ENCODE measurements at regions of chr16 and their contacts with region 1.

Region 1: GRCh38 chr16:87062569-87063442 is 254.4 kb downstream of the C16orf95 start:
- DNase-seq: no peak
- H3K4me3 ChIP-seq: peak overlapping the region; percentile 34
- CTCF ChIP-seq: peak; percentile 81

Region 2: GRCh38 chr16:86558355-86559193 is 504.2 kb before region 1 on chr16:
- CTCF ChIA-PET with region 1: interaction called, 309 read pairs
- POLR2A ChIA-PET with region 1: no interaction called
- DNase-seq: no peak
- H3K4me3 ChIP-seq: no peak overlapping the region
- CTCF ChIP-seq: no peak

Region 3: DNA sequence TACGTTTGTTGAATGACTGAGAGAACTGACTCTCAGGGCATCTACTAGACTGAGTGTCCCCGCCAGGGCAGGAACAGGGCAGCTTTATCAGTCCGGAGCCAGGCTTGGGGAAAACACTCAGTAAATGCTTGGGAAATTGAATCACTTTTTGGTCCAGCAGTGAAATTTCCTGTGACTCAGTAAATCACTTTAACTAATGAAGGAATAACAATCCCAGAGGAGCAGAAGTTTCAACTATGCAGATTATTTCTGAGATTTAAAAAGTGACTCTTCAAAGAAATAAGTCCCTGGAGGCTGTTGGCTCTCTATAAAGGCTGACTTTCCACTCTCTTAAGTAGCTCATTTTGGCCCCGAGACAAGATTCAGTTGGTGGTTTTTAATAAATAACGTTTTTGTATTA is 382.6 kb before region 1 on chr16:
- CTCF ChIA-PET with region 1: interaction called, 14 read pairs
- POLR2A ChIA-PET with region 1: no interaction called
- DNase-seq: peak; percentile 86
- H3K4me3 ChIP-seq: no peak overlapping the region
- CTCF ChIP-seq: no peak

Region 4: GRCh38 chr16:86854058-86854621 is 208.7 kb before region 1 on chr16:
- CTCF ChIA-PET with region 1: interaction called, 11 read pairs
- POLR2A ChIA-PET with region 1: no interaction called
- DNase-seq: peak; percentile 82
- H3K4me3 ChIP-seq: no peak overlapping the region
- CTCF ChIP-seq: no peak

Region 5: DNA sequence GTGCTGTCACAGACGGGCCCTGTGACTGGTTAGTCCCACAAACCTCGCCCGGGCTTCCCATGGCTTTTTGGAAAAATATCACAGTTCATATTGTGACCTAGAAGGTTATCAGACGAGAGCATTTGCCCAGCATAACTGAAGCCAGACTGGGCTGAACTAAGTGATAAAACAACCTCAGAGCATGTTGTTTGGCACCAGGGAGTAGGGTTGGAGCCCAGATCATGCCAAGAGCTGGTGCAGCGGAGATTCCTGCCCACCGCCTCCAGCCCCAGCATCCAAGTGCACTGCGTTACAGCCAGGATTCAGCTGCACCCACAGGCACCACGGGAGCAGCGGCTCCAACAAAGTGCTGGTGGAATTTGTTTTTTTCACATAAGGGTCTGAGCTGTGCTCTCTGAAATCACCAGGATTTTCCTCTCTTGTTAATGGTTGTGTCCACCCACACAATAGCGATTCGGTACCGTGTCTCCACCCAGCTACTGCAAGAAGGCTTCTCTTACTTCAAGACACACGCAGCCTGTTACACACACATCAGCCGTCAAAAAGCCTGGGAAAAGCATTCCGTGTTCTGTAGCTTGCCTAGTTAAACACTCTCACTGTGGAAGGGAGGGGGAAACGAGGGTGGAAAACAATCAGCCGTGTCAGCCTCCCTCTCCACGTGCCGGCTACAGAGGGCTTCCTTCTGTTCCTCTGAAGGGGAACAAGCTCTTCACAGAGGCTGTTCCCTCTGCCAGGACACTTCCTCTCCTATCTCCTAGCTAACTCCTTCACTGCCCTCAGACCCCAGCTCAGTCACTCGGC is 19.4 kb before region 1 on chr16:
- CTCF ChIA-PET with region 1: interaction called, 105 read pairs
- POLR2A ChIA-PET with region 1: no interaction called
- DNase-seq: no peak
- H3K4me3 ChIP-seq: no peak overlapping the region
- CTCF ChIP-seq: no peak

Region 6: DNA sequence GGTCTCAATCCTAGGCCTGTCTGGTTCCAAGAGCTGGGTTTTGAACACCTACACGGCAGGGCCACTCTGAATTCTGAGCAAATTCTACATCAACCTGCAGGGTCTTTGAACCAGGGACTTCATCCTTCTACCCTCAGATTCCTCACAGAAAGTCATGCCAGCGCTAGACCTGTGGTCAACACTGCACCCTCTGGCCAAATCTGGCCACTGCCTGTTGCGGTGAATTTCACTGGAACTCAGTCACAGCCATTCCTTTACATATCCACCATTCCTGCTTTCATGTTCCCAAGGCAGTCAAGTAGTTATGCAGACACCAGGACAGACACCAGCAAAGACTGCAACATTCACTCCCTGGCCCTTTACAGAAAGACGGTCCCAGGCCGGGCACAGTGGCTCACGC is 109.8 kb after region 1 on chr16:
- CTCF ChIA-PET with region 1: no interaction called
- POLR2A ChIA-PET with region 1: no interaction called
- DNase-seq: no peak
- H3K4me3 ChIP-seq: no peak overlapping the region
- CTCF ChIP-seq: no peak

Region 7: DNA sequence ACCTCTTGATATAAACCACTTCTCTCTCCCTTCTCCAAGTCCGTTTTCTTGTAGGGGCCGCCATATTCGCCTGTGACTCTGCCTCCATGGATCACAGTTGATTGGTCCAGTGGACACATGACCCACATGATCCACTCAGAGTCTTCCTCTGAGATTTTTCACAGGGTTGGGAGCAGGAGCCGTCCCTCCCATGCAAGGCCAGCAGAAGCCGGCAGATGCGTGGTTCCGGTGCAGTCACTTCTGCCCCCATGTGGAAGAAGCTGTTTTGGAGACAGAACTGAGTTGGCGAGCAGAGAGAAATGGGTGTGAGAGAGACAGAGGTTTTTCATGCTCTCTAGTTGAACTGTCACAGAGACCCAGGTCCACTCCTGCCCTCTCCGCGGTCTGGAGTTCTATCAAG is 171.1 kb after region 1 on chr16:
- CTCF ChIA-PET with region 1: interaction called, 15 read pairs
- POLR2A ChIA-PET with region 1: no interaction called
- DNase-seq: no peak
- H3K4me3 ChIP-seq: no peak overlapping the region
- CTCF ChIP-seq: peak; percentile 57